Activated CD4-positive, alpha-beta memory T cell treated with anti-CD3 and anti-CD28 coated beads for 36 hours (primary cell): ENCODE measurements at regions of chr19 and their contacts with region 1.

Region 1: GRCh38 chr19:10717356-10718204 is at the start of gene DNM2:
- DNase-seq: peak; percentile 99
- H3K4me3 Mint-ChIP-seq: peak within 1 kb of the TSS; percentile 95
- H3K27ac Mint-ChIP-seq: peak within 1 kb of the TSS; percentile 85
- H3K4me1 Mint-ChIP-seq: peaks cover 30% of the 10 kb centered on the region
- H3K27me3 Mint-ChIP-seq: no peaks in the 10 kb centered on the region
- total RNA-seq, gene DNM2: 171 to 173 TPM

Region 2: DNA sequence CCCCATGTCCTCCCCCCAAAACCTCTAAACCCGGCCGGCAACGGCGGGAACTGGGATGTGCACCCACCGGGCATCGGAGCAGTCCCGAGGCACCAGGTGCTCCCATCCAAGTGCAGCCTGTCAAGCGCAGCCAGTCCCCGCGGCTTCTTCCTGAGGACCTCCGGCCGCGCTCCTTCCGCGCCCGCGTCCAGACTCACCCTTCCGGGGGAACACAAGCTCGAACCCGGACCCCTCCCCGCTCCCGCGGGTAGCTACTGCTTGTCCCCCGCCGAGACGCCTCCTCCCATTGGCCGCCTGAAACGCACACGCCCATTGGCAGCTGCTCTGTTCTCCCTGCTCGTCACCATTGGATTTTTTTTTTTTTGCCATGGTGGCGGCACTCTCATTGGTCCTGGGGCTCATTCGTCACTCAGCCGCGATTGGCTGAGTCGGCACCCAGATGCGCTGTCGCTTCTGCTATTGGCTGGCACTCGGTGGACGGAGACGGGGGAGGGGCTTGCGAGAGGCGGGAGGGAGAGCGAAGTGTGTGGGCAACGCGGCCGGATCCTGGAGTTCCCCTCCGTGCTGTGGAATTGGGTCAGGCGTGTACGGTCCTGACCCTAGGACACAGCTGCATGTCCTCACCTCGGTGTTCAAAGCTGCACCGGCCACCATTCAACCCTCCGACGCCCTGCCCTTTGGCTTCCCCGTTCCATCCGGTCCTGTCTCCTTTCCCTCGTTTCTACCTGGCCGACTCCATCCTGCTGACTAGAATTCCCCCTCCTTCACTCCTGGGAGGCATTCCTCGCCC is 337.1 kb before region 1 on chr19 and contains the start of gene TYK2:
- CTCF ChIA-PET with region 1: no interaction called
- POLR2A ChIA-PET with region 1: no interaction called
- intact Hi-C with region 1: no loop called
- DNase-seq: peak; percentile 98
- H3K4me3 Mint-ChIP-seq: peak within 1 kb of the TSS; percentile 88
- H3K27ac Mint-ChIP-seq: peak within 1 kb of the TSS; percentile 88
- H3K4me1 Mint-ChIP-seq: peaks cover 20% of the 10 kb centered on the region
- H3K27me3 Mint-ChIP-seq: no peaks in the 10 kb centered on the region
- total RNA-seq, gene TYK2: 168 to 186 TPM

Region 3: DNA sequence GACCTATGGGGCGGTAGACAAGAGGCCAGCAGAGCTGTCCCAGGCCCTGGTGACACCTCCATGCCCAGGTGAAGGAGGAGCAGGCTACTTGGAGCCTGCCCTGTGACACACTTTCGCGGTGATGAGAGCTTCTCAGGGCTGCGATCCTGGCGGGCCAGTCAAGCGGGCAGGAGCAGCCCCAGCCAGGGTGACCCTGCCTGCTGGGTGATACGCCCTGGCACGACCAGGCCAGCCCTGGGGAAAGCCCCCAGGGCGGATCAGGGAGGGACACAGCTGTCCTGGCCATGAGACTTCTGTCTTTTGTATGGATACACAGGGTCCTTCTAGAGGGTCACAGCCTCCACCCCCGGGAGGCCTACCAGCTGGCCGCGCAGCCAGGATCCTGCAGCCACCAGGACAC is 13.3 kb after region 1 on chr19:
- CTCF ChIA-PET with region 1: interaction called, 14 read pairs
- POLR2A ChIA-PET with region 1: interaction called, 7 read pairs
- intact Hi-C with region 1: no loop called
- DNase-seq: no peak
- H3K4me3 Mint-ChIP-seq: peak overlapping the region; percentile 26
- H3K27ac Mint-ChIP-seq: peak overlapping the region; percentile 84
- H3K4me1 Mint-ChIP-seq: peaks cover 50% of the 10 kb centered on the region
- H3K27me3 Mint-ChIP-seq: no peaks in the 10 kb centered on the region

Region 4: DNA sequence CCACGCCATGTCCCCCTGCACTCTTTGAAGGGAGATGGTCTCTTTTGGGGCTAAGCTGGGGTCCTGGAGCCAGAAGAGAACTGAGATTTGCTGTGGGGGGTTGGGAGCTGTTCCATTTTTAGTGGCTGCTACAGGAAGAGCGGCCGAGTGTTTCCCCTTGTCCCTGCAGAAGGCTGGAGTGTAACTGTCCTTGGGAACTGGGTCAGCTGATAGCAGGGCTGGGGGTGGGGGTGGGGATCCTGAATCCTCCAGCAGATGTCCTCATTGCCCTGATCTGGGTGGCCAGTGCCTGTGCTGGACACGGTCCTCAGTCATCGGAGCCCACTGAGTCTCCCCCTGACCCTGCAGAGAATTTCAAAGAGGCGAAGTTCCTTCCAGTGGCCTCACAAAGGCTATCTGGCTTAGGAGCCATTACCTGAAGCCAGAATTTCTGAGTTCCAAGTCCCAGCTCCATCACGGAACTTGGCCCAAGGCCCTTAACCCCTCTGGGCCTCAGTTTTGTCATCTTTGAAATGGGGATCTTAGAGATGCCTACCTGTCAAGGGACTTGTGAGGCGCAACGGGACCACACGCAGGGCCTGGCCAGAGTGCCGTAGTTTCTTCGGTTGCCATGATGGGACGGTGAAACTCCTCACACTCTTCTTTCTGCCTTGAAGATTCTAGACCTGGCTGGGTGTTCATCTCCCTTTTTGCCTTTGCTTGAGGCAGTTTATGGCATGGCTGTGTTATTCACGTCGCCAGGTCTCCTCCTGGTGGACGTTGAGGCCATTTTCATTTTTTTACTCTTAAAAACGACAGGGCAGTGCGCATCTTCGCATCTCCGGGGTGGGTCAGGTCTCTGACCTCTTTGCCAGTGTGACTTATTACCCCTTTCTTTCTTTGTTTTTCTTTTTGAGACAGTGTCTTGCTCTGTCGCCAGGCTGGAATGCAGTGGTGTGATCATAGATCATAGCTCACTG is 52.2 kb after region 1 on chr19:
- CTCF ChIA-PET with region 1: interaction called, 23 read pairs
- POLR2A ChIA-PET with region 1: no interaction called
- intact Hi-C with region 1: no loop called
- DNase-seq: peak; percentile 20
- H3K4me3 Mint-ChIP-seq: no peak overlapping the region
- H3K27ac Mint-ChIP-seq: no peak overlapping the region
- H3K4me1 Mint-ChIP-seq: peaks cover 18% of the 10 kb centered on the region
- H3K27me3 Mint-ChIP-seq: no peaks in the 10 kb centered on the region

Region 5: DNA sequence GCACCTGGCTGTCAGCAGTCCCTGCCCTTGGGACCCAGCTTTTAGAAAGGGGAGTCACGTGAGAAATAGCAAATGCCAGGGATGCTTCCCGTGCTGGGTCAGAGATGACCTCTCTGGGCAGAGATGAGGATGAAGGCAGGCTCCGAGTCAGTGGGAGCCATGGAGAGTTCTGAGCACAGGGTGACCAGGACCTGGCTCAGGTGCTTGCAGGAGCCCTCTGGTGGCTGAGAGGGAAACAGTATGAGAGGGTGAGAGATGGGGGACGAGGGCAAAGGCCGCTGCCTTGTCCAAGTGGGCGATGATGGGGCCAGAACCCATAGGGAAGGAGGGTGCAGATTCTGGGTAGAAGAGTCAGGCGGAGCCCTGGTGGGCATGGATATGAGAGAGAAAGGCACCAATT is 102.6 kb after region 1 on chr19:
- CTCF ChIA-PET with region 1: interaction called, 21 read pairs
- POLR2A ChIA-PET with region 1: interaction called, 3 read pairs
- intact Hi-C with region 1: no loop called
- DNase-seq: no peak
- H3K4me3 Mint-ChIP-seq: no peak overlapping the region
- H3K27ac Mint-ChIP-seq: peak overlapping the region; percentile 78
- H3K4me1 Mint-ChIP-seq: no peaks in the 10 kb centered on the region
- H3K27me3 Mint-ChIP-seq: no peaks in the 10 kb centered on the region

Region 6: GRCh38 chr19:10858204-10858828 is 140.7 kb after region 1 on chr19:
- CTCF ChIA-PET with region 1: interaction called, 208 read pairs
- POLR2A ChIA-PET with region 1: interaction called, 7 read pairs
- intact Hi-C with region 1: loop called (anchors 1 kb)
- DNase-seq: peak; percentile 47
- H3K4me3 Mint-ChIP-seq: no peak overlapping the region
- H3K27ac Mint-ChIP-seq: no peak overlapping the region
- H3K4me1 Mint-ChIP-seq: peaks cover 4% of the 10 kb centered on the region
- H3K27me3 Mint-ChIP-seq: no peaks in the 10 kb centered on the region

Region 7: DNA sequence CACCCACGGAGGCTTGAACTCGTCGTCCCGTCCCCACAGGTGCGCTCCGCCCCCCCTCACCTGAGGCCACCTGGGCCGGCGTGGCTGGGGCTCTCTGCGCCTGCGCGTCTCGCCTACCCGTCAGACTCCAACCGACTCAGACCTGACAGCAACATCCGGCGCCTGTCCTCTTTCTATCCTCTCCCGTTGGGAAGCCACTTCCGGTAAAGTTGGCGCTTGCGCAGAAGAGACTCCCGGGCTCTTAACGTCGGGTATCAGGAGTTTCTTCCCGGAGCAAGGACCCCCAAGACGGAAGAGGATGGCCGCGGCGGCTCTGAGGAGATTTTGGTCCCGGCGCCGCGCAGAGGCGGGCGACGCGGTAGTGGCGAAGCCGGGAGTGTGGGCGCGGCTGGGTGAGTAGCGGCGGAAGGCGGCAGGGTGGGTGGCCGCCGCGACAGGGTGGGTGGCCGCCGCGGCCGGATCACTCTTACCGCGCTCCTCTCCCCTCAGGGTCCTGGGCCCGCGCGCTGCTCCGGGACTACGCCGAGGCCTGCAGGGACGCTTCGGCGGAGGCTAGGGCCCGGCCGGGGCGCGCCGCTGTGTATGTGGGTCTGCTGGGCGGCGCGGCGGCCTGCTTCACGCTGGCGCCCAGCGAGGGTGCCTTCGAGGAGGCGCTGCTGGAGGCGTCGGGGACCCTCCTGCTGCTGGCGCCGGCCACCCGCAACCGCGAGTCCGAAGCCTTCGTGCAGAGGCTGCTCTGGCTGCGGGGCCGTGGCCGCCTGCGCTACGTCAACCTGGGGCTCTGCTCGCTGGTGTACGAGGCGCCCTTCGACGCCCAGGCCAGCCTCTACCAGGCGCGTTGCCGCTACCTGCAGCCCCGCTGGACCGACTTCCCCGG is 211.2 kb after region 1 on chr19 and contains the starts of genes TIMM29 and YIPF2:
- CTCF ChIA-PET with region 1: no interaction called
- POLR2A ChIA-PET with region 1: no interaction called
- intact Hi-C with region 1: loop called (anchors 1 kb)
- DNase-seq: peak; percentile 97
- H3K4me3 Mint-ChIP-seq: peak within 1 kb of the TSS; percentile 92
- H3K27ac Mint-ChIP-seq: peak within 1 kb of the TSS; percentile 81
- H3K4me1 Mint-ChIP-seq: peaks cover 21% of the 10 kb centered on the region
- H3K27me3 Mint-ChIP-seq: no peaks in the 10 kb centered on the region
- total RNA-seq, gene TIMM29: 15.6 to 16.4 TPM
- total RNA-seq, gene YIPF2: 25.6 to 28.4 TPM